ENCODE measurements at regions of chr11 and their contacts with region 1.

Region 1: GRCh38 chr11:77473801-77474683 is at the start of gene PAK1:
- DNase-seq: no peak
- ATAC-seq: peak; percentile 86
- H3K4me3 ChIP-seq: peak within 1 kb of the TSS; percentile 92
- H3K27ac ChIP-seq: peak within 1 kb of the TSS; percentile 82
- H3K4me1 ChIP-seq: peaks cover 14% of the 10 kb centered on the region
- H3K27me3 ChIP-seq: no peaks in the 10 kb centered on the region
- CTCF ChIP-seq: peak; percentile 16 to 38 (median 36); a peak in 4 of 6 replicates
- EP300 ChIP-seq: peak; percentile 35 to 53; a peak in 2 of 4 replicates
- POLR2A ChIP-seq: peak; percentile 64
- RAD21 ChIP-seq: 0 out of 2 replicates have a peak, but pooled peaks have one; percentile 2
- polyA plus RNA-seq, gene PAK1: 43.8 to 49.4 TPM

Region 2: GRCh38 chr11:76444384-76445123 is 1029.5 kb before region 1 on chr11 and contains the start of gene EMSY:
- CTCF ChIA-PET with region 1: no interaction called
- POLR2A ChIA-PET with region 1: no interaction called
- RAD21 ChIA-PET with region 1: no interaction called
- SMC1A ChIA-PET with region 1: no interaction called
- in situ Hi-C with region 1: no loop called
- intact Hi-C with region 1: no loop called
- DNase-seq: peak; percentile 99
- ATAC-seq: peak; percentile 95
- H3K4me3 ChIP-seq: peak within 1 kb of the TSS; percentile 98
- H3K27ac ChIP-seq: peak within 1 kb of the TSS; percentile 95
- H3K4me1 ChIP-seq: no peaks in the 10 kb centered on the region; the same call in 1 of the 2 replicates
- H3K27me3 ChIP-seq: no peaks in the 10 kb centered on the region
- CTCF ChIP-seq: no peak
- EP300 ChIP-seq: no peak
- POLR2A ChIP-seq: peak; percentile 100
- RAD21 ChIP-seq: no peak
- polyA plus RNA-seq, gene EMSY: 9.3 to 9.8 TPM

Region 3: GRCh38 chr11:77400773-77401449 is 73.1 kb before region 1 on chr11:
- CTCF ChIA-PET with region 1: interaction called, 9 read pairs
- POLR2A ChIA-PET with region 1: interaction called, 5 read pairs
- RAD21 ChIA-PET with region 1: interaction called, 10 read pairs
- SMC1A ChIA-PET with region 1: interaction called, 24 read pairs
- in situ Hi-C with region 1: no loop called
- intact Hi-C with region 1: no loop called
- DNase-seq: no peak
- ATAC-seq: peak; percentile 75
- H3K4me3 ChIP-seq: no peak overlapping the region
- H3K27ac ChIP-seq: peak overlapping the region; percentile 17; the same call in 1 of the 2 replicates
- H3K4me1 ChIP-seq: peaks cover 19% of the 10 kb centered on the region
- H3K27me3 ChIP-seq: no peaks in the 10 kb centered on the region
- CTCF ChIP-seq: peak; percentile 14 to 28 (median 26); a peak in 4 of 6 replicates
- EP300 ChIP-seq: no peak
- POLR2A ChIP-seq: no peak
- RAD21 ChIP-seq: 0 out of 2 replicates have a peak, but pooled peaks have one; percentile 14

Region 4: GRCh38 chr11:77418155-77418970 is 55.7 kb before region 1 on chr11:
- CTCF ChIA-PET with region 1: interaction called, 29 read pairs
- POLR2A ChIA-PET with region 1: interaction called, 3 read pairs
- RAD21 ChIA-PET with region 1: interaction called, 83 read pairs
- SMC1A ChIA-PET with region 1: interaction called, 98 read pairs
- in situ Hi-C with region 1: no loop called
- intact Hi-C with region 1: no loop called
- DNase-seq: no peak
- ATAC-seq: peak; percentile 93
- H3K4me3 ChIP-seq: peak overlapping the region; percentile 31; the same call in 1 of the 2 replicates
- H3K27ac ChIP-seq: peak overlapping the region; percentile 67
- H3K4me1 ChIP-seq: peaks cover 8% of the 10 kb centered on the region
- H3K27me3 ChIP-seq: no peaks in the 10 kb centered on the region
- CTCF ChIP-seq: no peak
- EP300 ChIP-seq: no peak
- POLR2A ChIP-seq: no peak
- RAD21 ChIP-seq: no peak

Region 5: DNA sequence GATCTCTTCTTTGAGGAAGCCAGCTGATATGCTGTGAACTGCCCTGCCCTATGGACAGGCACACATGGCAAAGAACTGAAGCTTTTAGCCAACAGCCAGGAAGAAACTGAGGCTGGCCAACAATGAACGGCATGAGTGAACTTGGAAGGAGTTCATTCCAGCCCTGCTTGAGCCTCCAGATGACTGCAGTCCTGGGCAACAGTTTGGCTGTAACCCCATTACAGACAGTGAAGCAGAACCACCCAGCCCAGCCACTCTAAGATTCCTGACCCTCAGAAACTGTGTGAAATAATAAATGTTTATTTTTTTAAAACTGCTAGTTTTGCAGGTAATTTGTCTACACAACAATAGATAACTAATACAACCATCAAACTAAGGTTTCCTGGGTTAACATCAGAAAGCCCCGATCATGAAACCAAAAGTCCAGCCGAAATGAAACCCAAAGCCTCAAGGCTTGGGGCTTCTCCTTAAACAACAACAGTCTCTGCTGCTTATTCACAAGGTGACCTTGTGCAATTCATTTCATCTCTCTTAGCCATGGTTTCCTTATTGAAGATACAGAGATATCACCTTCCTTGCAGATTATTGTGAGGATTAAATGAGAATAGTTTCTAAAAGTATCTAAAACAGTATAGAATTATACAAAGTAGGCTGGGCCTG is 31.5 kb before region 1 on chr11:
- CTCF ChIA-PET with region 1: interaction called, 119 read pairs
- POLR2A ChIA-PET with region 1: interaction called, 100 read pairs
- RAD21 ChIA-PET with region 1: interaction called, 162 read pairs
- SMC1A ChIA-PET with region 1: interaction called, 289 read pairs
- in situ Hi-C with region 1: no loop called
- intact Hi-C with region 1: loop called (anchors 2 kb)
- DNase-seq: no peak
- ATAC-seq: peak; percentile 75
- H3K4me3 ChIP-seq: peak overlapping the region; percentile 17; the same call in 1 of the 2 replicates
- H3K27ac ChIP-seq: peak overlapping the region; percentile 82
- H3K4me1 ChIP-seq: peaks cover 72% of the 10 kb centered on the region
- H3K27me3 ChIP-seq: no peaks in the 10 kb centered on the region
- CTCF ChIP-seq: no peak
- EP300 ChIP-seq: no peak
- POLR2A ChIP-seq: no peak
- RAD21 ChIP-seq: no peak

Region 6: DNA sequence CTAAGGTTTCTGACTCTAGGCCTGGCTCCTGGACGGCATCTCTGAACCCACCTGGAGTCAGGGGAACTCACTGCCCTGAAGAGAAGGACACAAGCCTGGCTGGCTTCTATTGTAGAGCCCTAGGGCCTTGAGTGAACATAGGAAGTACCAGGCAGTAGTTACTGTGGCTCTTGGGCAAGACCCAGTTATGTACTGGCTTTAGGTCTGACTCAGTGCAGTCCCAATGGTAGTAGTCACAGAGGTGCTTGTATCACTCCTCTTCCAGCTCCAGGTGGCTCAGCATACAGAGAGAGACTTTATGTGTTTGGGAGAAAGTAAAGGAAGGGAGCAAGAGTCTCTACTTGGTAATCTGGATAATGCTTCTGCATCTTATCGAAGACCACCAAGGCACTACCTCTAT is 13.7 kb after region 1 on chr11:
- CTCF ChIA-PET with region 1: interaction called, 5 read pairs
- POLR2A ChIA-PET with region 1: no interaction called
- RAD21 ChIA-PET with region 1: interaction called, 3 read pairs
- SMC1A ChIA-PET with region 1: interaction called, 11 read pairs
- in situ Hi-C with region 1: no loop called
- intact Hi-C with region 1: no loop called
- DNase-seq: no peak
- ATAC-seq: no peak
- H3K4me3 ChIP-seq: no peak overlapping the region
- H3K27ac ChIP-seq: no peak overlapping the region
- H3K4me1 ChIP-seq: no peaks in the 10 kb centered on the region
- H3K27me3 ChIP-seq: no peaks in the 10 kb centered on the region
- CTCF ChIP-seq: no peak
- EP300 ChIP-seq: no peak
- POLR2A ChIP-seq: no peak
- RAD21 ChIP-seq: no peak

Region 7: DNA sequence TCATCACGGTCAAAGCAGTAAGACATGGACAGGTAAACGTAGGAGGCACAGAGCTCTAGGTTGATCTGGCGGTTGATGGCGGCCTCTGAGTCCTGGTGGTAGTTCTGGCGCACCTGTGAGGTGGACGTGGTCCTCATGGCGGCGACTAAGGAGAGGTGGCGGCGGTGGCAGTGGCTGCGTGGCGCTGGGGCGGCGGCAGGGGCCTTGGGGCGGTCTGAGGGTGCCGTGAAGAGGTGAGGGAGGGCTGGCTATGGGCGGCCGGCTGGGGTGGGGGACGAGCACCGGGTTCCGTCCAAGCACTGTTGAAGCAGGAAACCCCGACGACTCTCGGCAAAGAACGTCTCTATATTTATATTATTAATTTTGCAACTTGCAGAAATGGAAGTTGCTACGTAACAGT is 260.8 kb after region 1 on chr11:
- CTCF ChIA-PET with region 1: no interaction called
- POLR2A ChIA-PET with region 1: no interaction called
- RAD21 ChIA-PET with region 1: no interaction called
- SMC1A ChIA-PET with region 1: no interaction called
- in situ Hi-C with region 1: no loop called
- intact Hi-C with region 1: no loop called
- DNase-seq: no peak
- ATAC-seq: no peak
- H3K4me3 ChIP-seq: no peak overlapping the region
- H3K27ac ChIP-seq: no peak overlapping the region
- H3K4me1 ChIP-seq: no peaks in the 10 kb centered on the region
- H3K27me3 ChIP-seq: no peaks in the 10 kb centered on the region
- CTCF ChIP-seq: no peak
- EP300 ChIP-seq: no peak
- POLR2A ChIP-seq: no peak
- RAD21 ChIP-seq: no peak

Measured in GM12878 (cell line).